PC-9 (cell line): ENCODE measurements at regions of chr2 and their contacts with region 1.

Region 1: GRCh38 chr2:46296840-46297545 is at the start of gene EPAS1:
- DNase-seq: peak; percentile 83 to 95
- H3K4me3 ChIP-seq: peak within 1 kb of the TSS; percentile 80
- H3K27ac ChIP-seq: peak within 1 kb of the TSS; percentile 87
- H3K4me1 ChIP-seq: peaks cover 36% of the 10 kb centered on the region
- H3K27me3 ChIP-seq: no peaks in the 10 kb centered on the region
- CTCF ChIP-seq: no peak
- total RNA-seq, gene EPAS1: 127 and 163 TPM in 2 replicates

Region 2: GRCh38 chr2:44572196-44572900 is 1724.6 kb before region 1 on chr2:
- CTCF ChIA-PET with region 1: no interaction called
- POLR2A ChIA-PET with region 1: no interaction called
- intact Hi-C with region 1: no loop called
- DNase-seq: peak; percentile 9 to 66
- H3K4me3 ChIP-seq: no peak overlapping the region
- H3K27ac ChIP-seq: no peak overlapping the region
- H3K4me1 ChIP-seq: peaks cover 29% of the 10 kb centered on the region
- H3K27me3 ChIP-seq: no peaks in the 10 kb centered on the region
- CTCF ChIP-seq: no peak

Region 3: DNA sequence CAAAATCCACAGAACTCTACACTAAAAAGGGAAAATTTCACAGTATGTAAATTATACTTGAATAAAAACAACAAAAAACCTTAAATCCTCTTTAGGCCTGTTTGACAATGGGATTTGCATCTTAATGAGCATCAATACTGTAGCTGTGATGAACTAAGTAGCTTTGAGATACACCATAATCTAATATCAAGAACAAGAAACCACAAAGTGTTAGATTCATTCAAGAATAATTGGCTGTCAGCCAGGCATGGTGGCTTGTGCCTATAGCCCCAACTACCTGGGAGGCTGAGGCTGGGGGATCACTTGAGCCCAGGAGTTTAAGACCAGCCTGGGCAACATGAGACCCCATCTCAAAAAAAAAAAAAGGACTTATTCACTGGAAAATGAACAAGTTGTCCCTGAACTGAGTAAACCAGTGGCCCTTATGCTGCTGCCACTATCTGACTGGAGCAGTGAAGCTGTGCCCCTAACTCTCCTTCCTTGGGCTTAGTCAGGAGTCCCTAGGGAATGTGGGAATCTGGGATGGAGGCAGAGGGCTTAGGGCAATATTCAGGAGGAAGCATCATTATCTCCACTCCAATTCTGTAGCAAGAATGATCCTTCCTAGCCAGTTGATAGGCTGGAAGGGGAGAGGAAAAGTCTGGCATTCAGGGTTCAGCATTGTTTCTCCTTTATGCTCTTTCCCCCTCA is 557.1 kb before region 1 on chr2:
- CTCF ChIA-PET with region 1: no interaction called
- POLR2A ChIA-PET with region 1: no interaction called
- intact Hi-C with region 1: no loop called
- DNase-seq: no peak
- H3K4me3 ChIP-seq: no peak overlapping the region
- H3K27ac ChIP-seq: no peak overlapping the region
- H3K4me1 ChIP-seq: no peaks in the 10 kb centered on the region
- H3K27me3 ChIP-seq: no peaks in the 10 kb centered on the region
- CTCF ChIP-seq: no peak

Region 4: DNA sequence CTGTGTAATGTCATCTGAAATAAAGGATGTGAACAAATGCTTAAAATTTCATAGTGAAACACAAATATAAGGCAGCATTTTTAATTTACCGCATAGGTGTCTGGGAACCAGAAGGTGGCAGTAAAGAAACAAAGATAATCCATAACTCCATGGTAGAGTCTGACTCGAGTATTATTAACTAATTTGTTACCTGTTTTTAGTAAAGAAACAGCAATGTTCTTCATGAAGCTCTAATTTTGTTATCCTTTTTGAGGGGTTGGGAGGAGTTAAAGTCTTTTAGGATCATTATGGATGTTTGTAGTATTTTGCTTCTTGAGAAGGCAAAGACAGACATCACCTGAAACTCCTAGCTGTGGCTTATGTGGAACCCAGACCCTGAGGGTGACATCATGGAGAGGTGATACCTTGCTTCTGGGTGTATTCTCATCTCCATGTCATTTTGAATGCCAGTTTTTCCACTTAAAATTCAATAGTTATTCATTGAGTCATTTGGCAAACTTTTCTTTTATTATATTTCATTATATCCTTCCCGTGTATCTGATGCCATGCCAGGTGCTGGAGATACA is 286.0 kb before region 1 on chr2:
- CTCF ChIA-PET with region 1: no interaction called
- POLR2A ChIA-PET with region 1: no interaction called
- intact Hi-C with region 1: loop called (anchors 2 kb)
- DNase-seq: peak in 1 of 2 experiments; percentile 62
- H3K4me3 ChIP-seq: no peak overlapping the region
- H3K27ac ChIP-seq: no peak overlapping the region
- H3K4me1 ChIP-seq: peaks cover 18% of the 10 kb centered on the region
- H3K27me3 ChIP-seq: no peaks in the 10 kb centered on the region
- CTCF ChIP-seq: peak; percentile 95

Region 5: DNA sequence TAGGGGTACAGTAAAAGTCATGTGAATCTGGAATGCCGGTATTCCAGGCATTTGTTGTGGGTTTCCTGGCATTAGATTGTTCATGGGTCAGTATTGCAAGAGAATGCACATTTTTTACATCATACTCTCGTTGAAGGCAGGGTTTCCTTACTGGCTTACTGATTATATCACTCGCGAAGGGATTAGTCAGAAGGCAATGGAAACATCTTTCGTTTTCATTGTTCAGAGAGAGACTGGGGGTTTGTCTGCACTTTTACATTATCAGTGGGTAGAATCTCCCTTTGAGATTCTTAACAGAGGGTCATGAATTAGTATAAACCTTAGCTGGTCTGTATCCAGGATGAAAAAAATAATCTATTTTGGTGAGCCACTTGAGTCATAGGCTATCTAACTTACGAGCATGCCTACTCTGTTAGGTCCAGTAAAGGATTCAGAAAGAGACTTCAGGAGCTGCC is 229.1 kb before region 1 on chr2:
- CTCF ChIA-PET with region 1: interaction called, 5 read pairs
- POLR2A ChIA-PET with region 1: interaction called, 3 read pairs
- intact Hi-C with region 1: loop called (anchors 1 kb)
- DNase-seq: peak; percentile 60 to 98
- H3K4me3 ChIP-seq: peak overlapping the region; percentile 27
- H3K27ac ChIP-seq: peak overlapping the region; percentile 89
- H3K4me1 ChIP-seq: peaks cover 80% of the 10 kb centered on the region
- H3K27me3 ChIP-seq: no peaks in the 10 kb centered on the region
- CTCF ChIP-seq: no peak

Region 6: DNA sequence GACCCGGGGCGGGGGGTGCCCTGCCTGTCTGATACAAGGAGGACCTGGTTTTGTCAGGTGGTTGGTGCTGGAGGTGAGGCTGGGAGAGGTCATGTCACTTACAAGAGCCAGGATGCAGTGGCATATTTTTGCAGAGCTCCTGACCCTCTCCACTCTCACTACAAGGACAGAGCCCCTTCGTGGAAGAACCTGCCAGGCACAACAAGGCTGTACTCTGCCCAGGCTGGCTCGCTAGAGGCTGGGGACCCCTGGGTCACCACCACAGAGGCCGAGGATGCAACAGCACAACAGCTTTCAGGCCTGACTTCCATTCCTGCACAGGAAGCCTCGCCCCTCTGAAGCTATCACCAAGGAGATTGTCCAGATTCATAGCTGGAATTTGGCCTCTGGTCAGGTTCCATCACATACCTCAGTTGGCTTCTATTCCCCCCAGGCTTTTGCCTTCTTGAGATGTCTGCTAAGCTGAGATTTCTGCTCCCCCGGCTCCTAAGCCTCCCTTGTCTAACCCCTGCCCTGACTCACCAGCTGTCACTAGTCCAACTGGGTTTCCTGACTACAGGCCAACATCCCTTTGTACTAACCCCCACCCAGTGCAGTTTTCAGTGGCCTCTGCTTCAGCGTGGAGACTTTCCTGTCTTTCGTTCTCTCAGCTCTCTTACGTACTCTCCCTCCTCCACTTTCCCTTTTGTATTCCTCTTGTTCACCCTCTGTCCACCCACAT is 132.3 kb before region 1 on chr2:
- CTCF ChIA-PET with region 1: interaction called, 5 read pairs
- POLR2A ChIA-PET with region 1: interaction called, 17 read pairs
- intact Hi-C with region 1: loop called (anchors 1 kb)
- DNase-seq: peak; percentile 93 to 99
- H3K4me3 ChIP-seq: peak overlapping the region; percentile 36; the same call in 1 of the 2 replicates
- H3K27ac ChIP-seq: peak overlapping the region; percentile 96
- H3K4me1 ChIP-seq: peaks cover 74% of the 10 kb centered on the region
- H3K27me3 ChIP-seq: no peaks in the 10 kb centered on the region
- CTCF ChIP-seq: 0 out of 2 replicates have a peak, but pooled peaks have one; percentile 13

Region 7: GRCh38 chr2:46229134-46230063 is 67.6 kb before region 1 on chr2:
- CTCF ChIA-PET with region 1: interaction called, 3 read pairs
- POLR2A ChIA-PET with region 1: no interaction called
- intact Hi-C with region 1: loop called (anchors 10 kb)
- DNase-seq: no peak
- H3K4me3 ChIP-seq: no peak overlapping the region
- H3K27ac ChIP-seq: no peak overlapping the region
- H3K4me1 ChIP-seq: peaks cover 33% of the 10 kb centered on the region
- H3K27me3 ChIP-seq: no peaks in the 10 kb centered on the region
- CTCF ChIP-seq: no peak

Region 8: GRCh38 chr2:46329803-46330775 is 33.1 kb after region 1 on chr2:
- CTCF ChIA-PET with region 1: no interaction called
- POLR2A ChIA-PET with region 1: no interaction called
- intact Hi-C with region 1: no loop called
- DNase-seq: peak in 1 of 2 experiments; percentile 94
- H3K4me3 ChIP-seq: no peak overlapping the region
- H3K27ac ChIP-seq: peak overlapping the region; percentile 36
- H3K4me1 ChIP-seq: peaks cover 68% of the 10 kb centered on the region
- H3K27me3 ChIP-seq: no peaks in the 10 kb centered on the region
- CTCF ChIP-seq: no peak

Region 9: GRCh38 chr2:46364797-46365457 is 67.9 kb after region 1 on chr2:
- CTCF ChIA-PET with region 1: no interaction called
- POLR2A ChIA-PET with region 1: no interaction called
- intact Hi-C with region 1: loop called (anchors 1 kb)
- DNase-seq: peak; percentile 35 to 49
- H3K4me3 ChIP-seq: no peak overlapping the region
- H3K27ac ChIP-seq: no peak overlapping the region
- H3K4me1 ChIP-seq: 0 out of 2 replicates have a peak, but pooled peaks cover 12% of the 10 kb centered on the region
- H3K27me3 ChIP-seq: no peaks in the 10 kb centered on the region
- CTCF ChIP-seq: peak; percentile 98

Region 10: DNA sequence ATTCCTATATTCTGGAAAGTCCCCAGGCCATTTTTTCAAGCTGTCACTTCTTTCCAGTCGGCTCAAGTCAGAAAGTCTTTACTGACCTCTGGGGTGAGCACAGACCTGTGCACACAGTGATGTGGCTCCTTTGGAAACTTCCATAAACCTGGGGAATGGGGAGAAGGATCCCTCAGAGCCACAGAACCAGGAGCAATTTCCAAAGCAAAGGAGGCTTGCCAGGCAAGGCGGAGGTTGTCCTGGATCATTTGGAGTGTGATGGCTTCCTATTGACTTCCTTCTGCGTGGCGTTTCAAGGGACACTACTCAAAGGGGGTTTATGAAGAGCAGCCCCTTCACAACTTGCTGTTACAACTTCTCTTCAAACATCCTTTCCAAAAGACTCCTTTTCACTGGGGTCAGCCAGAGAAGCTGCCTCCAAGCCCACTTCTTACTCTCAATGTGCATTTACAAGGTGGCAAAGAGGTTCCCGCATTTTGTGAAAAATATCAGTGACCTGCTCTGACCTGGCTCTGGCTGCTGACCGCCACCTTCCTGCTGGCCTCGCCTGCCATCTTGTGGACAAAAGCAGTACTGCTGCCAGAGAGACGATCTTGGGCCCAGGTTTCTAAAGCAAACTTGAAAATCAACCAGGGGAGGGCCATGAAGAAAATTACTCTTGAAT is 164.2 kb after region 1 on chr2:
- CTCF ChIA-PET with region 1: no interaction called
- POLR2A ChIA-PET with region 1: no interaction called
- intact Hi-C with region 1: loop called (anchors 2 kb)
- DNase-seq: peak; percentile 65 to 86
- H3K4me3 ChIP-seq: no peak overlapping the region
- H3K27ac ChIP-seq: no peak overlapping the region
- H3K4me1 ChIP-seq: peaks cover 7% of the 10 kb centered on the region
- H3K27me3 ChIP-seq: no peaks in the 10 kb centered on the region
- CTCF ChIP-seq: peak; percentile 100